Activated naive CD4-positive, alpha-beta T cell treated with anti-CD3 and anti-CD28 coated beads for 36 hours (primary cell): ENCODE measurements at regions of chr4 and their contacts with region 1.

Region 1: GRCh38 chr4:83259586-83259985 is 25.0 kb downstream of the COQ2 start:
- DNase-seq: no peak
- H3K4me3 Mint-ChIP-seq: no peak overlapping the region
- H3K27ac Mint-ChIP-seq: no peak overlapping the region
- H3K4me1 Mint-ChIP-seq: no peaks in the 10 kb centered on the region
- H3K27me3 Mint-ChIP-seq: no peaks in the 10 kb centered on the region

Region 2: DNA sequence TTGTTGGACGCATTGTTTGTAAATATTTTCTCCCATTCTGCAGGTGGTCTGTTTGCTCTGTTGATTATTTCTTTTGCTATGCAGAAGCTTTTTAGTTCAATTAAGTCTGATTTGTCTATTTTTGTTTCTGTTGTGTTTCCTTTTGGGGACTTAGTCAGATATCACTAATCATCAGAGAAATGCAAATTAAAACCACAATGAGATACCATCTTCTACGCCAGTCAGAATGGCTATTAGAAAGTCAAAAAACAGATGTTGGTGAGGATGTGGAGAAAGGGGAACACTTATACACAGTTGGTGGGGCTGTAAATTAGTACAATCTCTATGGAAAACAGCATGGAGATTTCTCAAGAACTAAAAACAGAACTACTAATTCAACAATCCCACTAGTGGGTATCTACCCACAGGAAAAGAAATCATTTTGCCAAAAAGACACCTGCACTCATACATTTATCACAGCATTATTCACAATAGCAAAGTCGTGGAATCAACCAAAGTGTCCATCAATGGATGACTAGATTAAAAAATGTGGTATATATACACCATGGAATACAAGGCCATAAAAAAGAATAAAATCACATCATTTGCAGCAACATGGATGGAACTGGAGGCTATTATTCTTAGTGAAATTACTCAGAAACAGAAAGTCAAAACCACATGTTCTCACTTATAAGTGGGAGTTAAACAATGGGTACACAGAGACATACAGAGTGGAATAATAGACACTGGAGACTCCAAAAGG is 16.9 kb after region 1 on chr4:
- CTCF ChIA-PET with region 1: interaction called, 30 read pairs
- intact Hi-C with region 1: no loop called
- DNase-seq: no peak
- H3K4me3 Mint-ChIP-seq: no peak overlapping the region
- H3K27ac Mint-ChIP-seq: no peak overlapping the region
- H3K4me1 Mint-ChIP-seq: peaks cover 21% of the 10 kb centered on the region
- H3K27me3 Mint-ChIP-seq: no peaks in the 10 kb centered on the region